Activated naive CD4-positive, alpha-beta T cell treated with anti-CD3 and anti-CD28 coated beads for 36 hours (primary cell): ENCODE measurements at regions of chr5 and their contacts with region 1.

Region 1: DNA sequence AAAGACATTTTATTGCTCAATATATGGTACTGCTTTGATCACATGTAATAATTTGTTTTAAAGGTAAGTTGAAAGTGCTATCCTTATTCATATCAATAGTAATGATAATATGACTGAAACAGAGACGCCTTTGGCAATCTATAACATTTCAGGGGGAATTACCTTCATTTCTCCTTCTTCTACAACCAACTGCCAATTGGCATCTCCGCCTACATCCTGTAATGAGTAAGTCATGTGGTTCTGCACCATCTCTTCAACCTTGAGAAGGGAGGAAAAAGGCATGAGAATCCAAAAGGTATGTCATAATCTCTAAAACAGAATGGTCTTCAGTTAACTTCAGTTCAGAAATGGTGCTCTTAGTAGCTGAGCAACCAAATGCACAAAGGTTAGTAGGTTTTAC is 52.4 kb downstream of the HMGCR start:
- DNase-seq: peak; percentile 48
- H3K4me3 Mint-ChIP-seq: no peak overlapping the region
- H3K27ac Mint-ChIP-seq: peak overlapping the region; percentile 6
- H3K4me1 Mint-ChIP-seq: peaks cover 11% of the 10 kb centered on the region
- H3K27me3 Mint-ChIP-seq: no peaks in the 10 kb centered on the region

Region 2: DNA sequence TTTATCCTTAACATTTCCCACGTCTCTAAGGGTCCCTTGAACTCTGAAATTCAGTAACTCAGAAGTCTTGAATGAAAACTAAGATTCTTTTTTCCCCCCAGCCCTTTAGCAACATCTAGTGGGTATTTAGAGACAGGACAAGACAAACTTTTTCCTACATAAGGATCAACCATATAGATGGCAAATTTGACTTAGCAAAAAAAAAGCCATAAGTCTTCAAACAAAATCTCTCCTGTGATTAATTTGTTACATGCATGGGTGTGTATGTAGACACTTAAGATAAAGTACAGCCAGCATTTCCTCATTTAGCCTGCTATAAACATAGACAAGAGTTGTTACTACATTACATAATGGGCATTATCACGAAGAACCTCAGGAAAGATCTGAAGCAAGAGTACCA is 123.7 kb before region 1 on chr5:
- CTCF ChIA-PET with region 1: no interaction called
- intact Hi-C with region 1: no loop called
- DNase-seq: no peak
- H3K4me3 Mint-ChIP-seq: no peak overlapping the region
- H3K27ac Mint-ChIP-seq: no peak overlapping the region
- H3K4me1 Mint-ChIP-seq: no peaks in the 10 kb centered on the region
- H3K27me3 Mint-ChIP-seq: no peaks in the 10 kb centered on the region

Region 3: DNA sequence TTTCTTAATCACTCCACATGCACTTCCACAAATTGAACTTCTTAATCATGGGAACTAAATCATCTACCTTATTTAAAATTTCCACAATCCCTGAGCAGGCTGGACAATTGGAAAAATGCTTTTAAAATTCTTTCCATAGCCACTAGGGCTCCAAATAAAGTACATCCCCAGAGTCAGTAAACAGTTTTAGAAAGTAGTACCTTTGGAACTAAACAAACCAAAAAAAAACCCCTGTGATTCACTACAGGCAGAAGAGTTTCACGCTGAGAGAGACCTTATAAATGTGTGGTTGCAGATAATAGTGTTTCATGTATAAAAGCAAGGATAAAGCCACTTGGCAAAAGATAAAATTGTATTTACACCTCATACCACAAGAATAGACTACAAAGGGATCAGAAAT is 64.2 kb before region 1 on chr5:
- CTCF ChIA-PET with region 1: no interaction called
- intact Hi-C with region 1: loop called (anchors 1 kb)
- DNase-seq: no peak
- H3K4me3 Mint-ChIP-seq: no peak overlapping the region
- H3K27ac Mint-ChIP-seq: peak overlapping the region; percentile 48
- H3K4me1 Mint-ChIP-seq: peaks cover 21% of the 10 kb centered on the region
- H3K27me3 Mint-ChIP-seq: no peaks in the 10 kb centered on the region

Region 4: DNA sequence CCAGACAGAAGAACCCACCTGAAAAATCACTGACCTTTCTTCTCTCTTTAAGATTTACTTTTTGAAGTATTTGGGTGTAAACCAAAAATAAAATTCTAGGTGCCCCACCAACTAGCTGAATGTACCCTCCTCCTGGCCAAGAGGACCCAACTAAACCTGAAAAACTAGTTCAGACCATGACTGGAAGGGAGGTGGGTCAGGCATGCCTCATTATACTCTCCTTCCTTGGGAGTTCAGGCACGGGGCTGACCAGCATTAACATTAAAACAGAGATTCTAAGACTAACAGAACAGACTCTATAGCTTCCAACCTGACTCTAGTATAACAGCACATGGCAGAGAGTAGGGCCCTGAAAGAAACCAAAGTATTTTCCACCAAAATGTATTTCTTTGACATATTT is 60.6 kb after region 1 on chr5:
- CTCF ChIA-PET with region 1: no interaction called
- intact Hi-C with region 1: no loop called
- DNase-seq: no peak
- H3K4me3 Mint-ChIP-seq: no peak overlapping the region
- H3K27ac Mint-ChIP-seq: no peak overlapping the region
- H3K4me1 Mint-ChIP-seq: peaks cover 1% of the 10 kb centered on the region
- H3K27me3 Mint-ChIP-seq: no peaks in the 10 kb centered on the region

Region 5: DNA sequence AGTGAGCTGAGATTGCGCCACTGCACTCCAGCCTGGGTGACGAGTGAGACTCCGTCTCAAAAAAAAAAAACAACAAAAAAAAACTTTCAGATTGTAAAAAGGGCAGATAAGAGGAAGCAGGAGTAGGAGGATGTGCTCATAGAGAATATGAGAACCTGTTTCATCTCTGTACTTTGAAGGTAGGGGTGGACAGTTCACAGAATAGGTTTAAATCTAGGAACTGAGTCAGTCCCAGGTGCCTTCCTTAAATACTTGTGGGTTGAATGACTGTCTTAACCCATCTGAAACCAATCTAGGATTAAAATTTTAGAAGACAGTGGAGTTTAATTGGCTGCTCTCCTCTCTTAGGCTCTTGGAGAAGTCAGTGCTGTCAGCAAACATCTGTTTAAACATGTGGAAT is 134.6 kb after region 1 on chr5:
- CTCF ChIA-PET with region 1: no interaction called
- intact Hi-C with region 1: loop called (anchors 1 kb)
- DNase-seq: peak; percentile 30
- H3K4me3 Mint-ChIP-seq: peak overlapping the region; percentile 12
- H3K27ac Mint-ChIP-seq: peak overlapping the region; percentile 72
- H3K4me1 Mint-ChIP-seq: peaks cover 61% of the 10 kb centered on the region
- H3K27me3 Mint-ChIP-seq: no peaks in the 10 kb centered on the region

Region 6: DNA sequence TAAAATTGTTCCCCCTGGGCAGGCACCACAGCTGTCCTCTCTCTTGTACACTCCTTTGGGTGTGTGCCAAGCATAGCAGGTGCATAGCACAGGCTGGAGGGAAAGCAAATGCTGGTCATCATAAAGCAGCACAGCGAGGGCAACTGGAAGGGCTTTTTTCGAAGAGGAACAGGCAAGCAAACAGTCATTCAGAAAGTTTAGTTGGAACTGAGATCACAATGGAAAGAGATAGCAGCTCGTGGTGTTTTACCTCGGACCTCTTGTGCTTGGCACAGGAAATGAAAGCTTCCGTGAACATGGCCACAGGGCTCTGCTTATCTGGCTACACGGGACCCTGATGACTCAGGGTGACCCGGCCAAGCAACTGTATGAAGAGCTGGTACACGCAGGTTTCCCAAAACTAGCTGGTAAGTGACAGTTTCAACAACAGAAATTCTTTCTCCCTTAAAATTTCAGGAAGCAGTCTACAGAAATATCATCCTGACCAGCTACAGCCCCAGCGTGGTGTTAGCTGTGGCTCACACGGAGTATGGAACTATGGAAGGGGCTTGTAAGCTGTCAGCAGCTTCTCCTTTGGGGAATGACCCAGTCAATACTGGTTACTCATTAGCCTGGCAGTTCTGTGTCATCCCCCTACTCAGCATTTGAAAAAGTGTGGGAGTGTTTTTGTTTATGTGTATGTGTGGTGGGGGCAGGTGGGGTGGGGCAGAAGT is 279.7 kb after region 1 on chr5:
- CTCF ChIA-PET with region 1: no interaction called
- intact Hi-C with region 1: loop called (anchors 5 kb)
- DNase-seq: peak; percentile 82
- H3K4me3 Mint-ChIP-seq: peak overlapping the region; percentile 49
- H3K27ac Mint-ChIP-seq: peak overlapping the region; percentile 70
- H3K4me1 Mint-ChIP-seq: peaks cover 30% of the 10 kb centered on the region
- H3K27me3 Mint-ChIP-seq: no peaks in the 10 kb centered on the region